ENCODE measurements at regions of chr18 and their contacts with region 1.

Region 1: DNA sequence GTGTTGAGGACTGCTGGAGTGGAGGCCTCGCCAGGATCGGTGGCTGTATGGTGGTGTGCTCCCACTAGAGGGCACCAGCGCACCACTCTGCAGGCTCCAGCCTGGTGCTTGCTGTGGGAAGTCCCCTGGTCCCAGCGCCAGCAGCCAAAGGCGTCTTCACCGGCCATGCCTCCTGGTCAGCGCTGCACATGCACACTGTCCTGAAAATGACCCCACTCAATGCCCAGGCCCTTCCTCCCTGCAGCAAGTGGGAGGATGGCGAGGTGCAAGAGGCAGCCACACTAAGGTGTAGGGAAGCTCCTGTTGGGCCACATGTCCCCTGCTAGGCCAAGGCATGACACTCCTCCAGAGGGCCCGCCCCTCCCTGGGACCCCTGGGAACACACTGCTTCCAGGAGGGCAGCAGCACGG is 136.5 kb downstream of the CTIF start:
- DNase-seq: peak; percentile 78
- ATAC-seq: peak; percentile 98
- H3K4me3 Mint-ChIP-seq: no peak overlapping the region
- H3K27ac Mint-ChIP-seq: no peak overlapping the region
- H3K4me1 Mint-ChIP-seq: peaks cover 3% of the 10 kb centered on the region
- H3K27me3 Mint-ChIP-seq: no peaks in the 10 kb centered on the region
- CTCF ChIP-seq: no peak

Region 2: GRCh38 chr18:48488388-48488850 is 186.9 kb before region 1 on chr18:
- CTCF ChIA-PET with region 1: no interaction called
- POLR2A ChIA-PET with region 1: no interaction called
- intact Hi-C with region 1: no loop called
- DNase-seq: no peak
- ATAC-seq: no peak
- H3K4me3 Mint-ChIP-seq: no peak overlapping the region
- H3K27ac Mint-ChIP-seq: no peak overlapping the region
- H3K4me1 Mint-ChIP-seq: no peaks in the 10 kb centered on the region
- H3K27me3 Mint-ChIP-seq: peaks cover 27% of the 10 kb centered on the region
- CTCF ChIP-seq: no peak

Region 3: GRCh38 chr18:48913201-48913600 is 237.8 kb after region 1 on chr18:
- CTCF ChIA-PET with region 1: no interaction called
- POLR2A ChIA-PET with region 1: no interaction called
- intact Hi-C with region 1: loop called (anchors 2 kb)
- DNase-seq: no peak
- ATAC-seq: peak; percentile 79
- H3K4me3 Mint-ChIP-seq: no peak overlapping the region
- H3K27ac Mint-ChIP-seq: no peak overlapping the region
- H3K4me1 Mint-ChIP-seq: peaks cover 10% of the 10 kb centered on the region
- H3K27me3 Mint-ChIP-seq: no peaks in the 10 kb centered on the region
- CTCF ChIP-seq: no peak

Region 4: DNA sequence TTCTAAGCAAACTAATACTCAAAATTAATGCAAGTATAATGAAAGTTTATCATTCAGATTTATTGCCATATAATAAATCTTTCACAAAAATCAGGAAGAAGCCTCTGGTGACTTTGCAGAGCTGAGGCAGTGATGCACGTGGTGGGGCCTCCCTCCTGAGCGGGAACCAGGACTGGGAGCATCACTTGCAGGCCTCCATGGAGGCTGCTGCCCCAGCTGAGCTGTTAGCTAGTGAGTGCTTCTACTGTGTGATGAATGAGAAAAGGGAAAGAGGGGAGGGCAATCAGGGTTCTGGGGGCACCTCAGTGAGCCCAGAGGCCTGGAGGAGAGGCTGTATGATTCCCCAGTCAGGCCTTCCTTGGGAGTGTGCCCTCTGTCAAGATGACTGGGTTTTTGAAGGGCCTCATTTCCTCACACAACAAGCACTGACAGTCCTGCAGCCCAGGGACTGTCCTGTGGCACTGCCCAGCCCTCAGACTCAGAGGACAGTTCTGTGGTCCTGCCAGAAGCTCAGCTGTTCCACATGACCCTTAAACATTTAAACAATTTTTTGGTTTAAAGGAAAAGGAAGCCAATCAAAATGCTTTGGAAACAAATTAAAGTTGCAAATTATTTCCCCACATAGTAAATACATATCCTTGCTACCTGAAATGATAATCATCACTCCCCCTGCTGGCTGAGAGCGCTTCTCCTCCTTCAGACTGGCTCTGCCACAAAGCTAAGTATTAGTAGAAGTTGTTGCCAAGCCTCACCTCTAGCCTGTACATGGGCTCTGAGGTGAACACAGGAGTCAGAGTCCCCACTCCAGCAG is 366.3 kb after region 1 on chr18:
- CTCF ChIA-PET with region 1: interaction called, 4 read pairs
- POLR2A ChIA-PET with region 1: no interaction called
- intact Hi-C with region 1: loop called (anchors 1 kb)
- DNase-seq: no peak
- ATAC-seq: no peak
- H3K4me3 Mint-ChIP-seq: no peak overlapping the region
- H3K27ac Mint-ChIP-seq: no peak overlapping the region
- H3K4me1 Mint-ChIP-seq: peaks cover 3% of the 10 kb centered on the region
- H3K27me3 Mint-ChIP-seq: no peaks in the 10 kb centered on the region
- CTCF ChIP-seq: no peak

Region 5: DNA sequence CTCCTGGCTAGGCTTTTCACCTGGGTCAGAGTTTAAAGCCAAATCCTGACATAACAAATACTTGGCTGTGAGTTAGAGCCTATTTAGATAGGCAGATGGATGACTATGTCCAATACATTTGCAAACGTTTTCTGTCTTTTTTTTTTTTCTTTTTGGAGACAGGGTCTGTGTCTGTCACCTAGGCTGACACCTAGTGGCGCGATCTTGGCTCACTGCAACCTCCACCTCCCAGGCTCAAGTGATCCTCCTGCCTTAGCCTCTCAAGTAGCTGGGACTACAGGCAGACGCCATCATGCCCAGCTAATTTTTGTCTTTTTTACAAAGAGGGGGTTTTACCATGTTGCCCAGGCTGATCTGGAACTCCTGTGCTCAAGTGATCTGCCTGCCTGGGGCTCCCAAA is 660.3 kb after region 1 on chr18:
- CTCF ChIA-PET with region 1: interaction called, 4 read pairs
- POLR2A ChIA-PET with region 1: no interaction called
- intact Hi-C with region 1: loop called (anchors 1 kb)
- DNase-seq: no peak
- ATAC-seq: no peak
- H3K4me3 Mint-ChIP-seq: no peak overlapping the region
- H3K27ac Mint-ChIP-seq: no peak overlapping the region
- H3K4me1 Mint-ChIP-seq: no peaks in the 10 kb centered on the region
- H3K27me3 Mint-ChIP-seq: no peaks in the 10 kb centered on the region
- CTCF ChIP-seq: no peak

Region 6: DNA sequence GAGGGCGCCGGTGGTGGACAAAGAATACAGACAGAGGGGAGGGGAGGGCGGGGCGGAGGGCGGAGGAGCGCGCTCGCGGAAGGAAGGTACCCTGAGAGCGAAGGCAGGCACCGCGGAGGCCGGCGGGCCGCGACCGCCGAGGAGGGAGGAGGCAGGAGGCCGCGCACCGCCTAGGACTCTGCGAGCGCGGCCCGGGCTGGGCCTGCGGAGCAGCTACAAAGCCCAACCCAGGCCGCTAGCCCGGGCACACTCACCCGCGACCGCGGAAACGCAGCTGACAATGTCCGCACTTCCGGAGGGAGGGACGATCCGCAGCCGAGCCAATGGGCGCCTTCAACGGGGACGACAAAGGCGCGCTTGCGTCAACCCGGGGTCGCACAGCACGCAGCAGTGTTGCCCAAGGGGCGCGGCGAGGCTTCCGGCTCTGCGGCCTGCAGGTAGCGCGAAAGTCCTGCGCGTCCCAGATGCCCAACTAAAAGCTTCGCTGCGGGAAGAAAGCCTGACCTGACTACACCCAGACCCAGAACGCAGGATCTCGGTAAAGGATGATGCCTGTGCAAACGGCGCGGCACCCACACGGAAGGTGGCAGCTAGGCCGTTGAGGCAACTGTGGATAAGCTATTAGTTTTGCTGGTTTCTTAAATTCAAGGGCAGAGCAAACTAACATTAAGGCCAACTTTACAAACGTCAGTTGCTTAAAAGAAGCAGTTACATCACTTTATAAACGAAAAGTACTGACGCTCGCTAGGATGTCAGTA is 811.8 kb after region 1 on chr18 and contains the start of gene C18orf32:
- CTCF ChIA-PET with region 1: no interaction called
- POLR2A ChIA-PET with region 1: no interaction called
- intact Hi-C with region 1: loop called (anchors 2 kb)
- DNase-seq: peak; percentile 94
- ATAC-seq: peak; percentile 92
- H3K4me3 Mint-ChIP-seq: peak within 1 kb of the TSS; percentile 94
- H3K27ac Mint-ChIP-seq: peak within 1 kb of the TSS; percentile 98
- H3K4me1 Mint-ChIP-seq: peaks cover 68% of the 10 kb centered on the region
- H3K27me3 Mint-ChIP-seq: no peaks in the 10 kb centered on the region
- CTCF ChIP-seq: no peak
- total RNA-seq, gene C18orf32: 31.6 and 32.9 TPM in 2 replicates

Region 7: DNA sequence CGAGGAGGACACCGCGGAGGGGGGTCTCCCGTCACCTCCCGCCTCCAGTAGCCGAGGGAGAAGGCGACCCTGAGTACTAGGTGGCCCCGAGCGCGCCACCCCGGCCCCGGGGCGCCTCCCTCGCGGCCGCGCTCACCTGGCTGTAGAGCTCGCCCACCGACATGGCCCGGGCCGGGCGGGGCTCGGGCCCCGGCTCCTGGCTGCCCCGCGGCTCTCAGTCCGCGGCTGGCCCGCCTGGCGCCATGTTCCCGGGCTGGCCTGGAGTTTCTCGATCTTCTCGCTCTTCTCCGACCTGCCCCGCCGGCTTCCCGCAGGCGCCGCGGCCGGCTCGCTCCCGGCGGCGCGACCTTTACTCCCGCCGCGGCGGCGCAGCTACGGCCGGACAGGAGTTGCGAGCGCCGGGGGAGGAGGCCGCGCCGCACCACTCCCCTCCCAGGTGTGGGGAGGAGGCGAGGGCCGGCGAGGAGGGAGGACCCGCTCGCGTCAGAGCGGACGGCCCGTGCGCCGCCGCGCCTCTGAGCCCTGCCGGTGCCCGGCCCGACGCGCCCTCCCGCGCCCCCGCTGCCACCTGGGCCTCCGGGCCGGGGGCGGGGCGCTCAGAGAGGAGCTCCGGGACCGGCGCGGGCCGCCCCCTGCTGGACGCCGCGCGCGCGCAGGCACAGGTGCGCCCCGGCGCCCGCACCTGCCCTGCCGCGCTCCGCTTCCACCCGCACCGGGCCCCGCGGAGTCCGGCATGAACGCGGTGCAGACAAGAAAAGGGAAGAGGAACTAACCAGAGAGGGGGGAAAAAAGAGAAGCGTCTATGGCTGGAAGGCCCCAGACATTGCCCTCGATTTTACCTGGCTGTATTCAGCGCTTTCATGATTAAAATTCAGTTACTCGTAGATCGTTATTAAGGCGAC is 1519.5 kb after region 1 on chr18 and contains the start of gene MYO5B:
- CTCF ChIA-PET with region 1: interaction called, 3 read pairs
- POLR2A ChIA-PET with region 1: no interaction called
- intact Hi-C with region 1: loop called (anchors 10 kb)
- DNase-seq: peak; percentile 57
- ATAC-seq: peak; percentile 87
- H3K4me3 Mint-ChIP-seq: peak within 1 kb of the TSS; percentile 33
- H3K27ac Mint-ChIP-seq: no peak within 1 kb of the TSS
- H3K4me1 Mint-ChIP-seq: peaks cover 12% of the 10 kb centered on the region
- H3K27me3 Mint-ChIP-seq: peaks cover 53% of the 10 kb centered on the region
- CTCF ChIP-seq: no peak
- total RNA-seq, gene MYO5B: 0.49 and 0.51 TPM in 2 replicates

Region 8: GRCh38 chr18:50429207-50429948 is 1754.0 kb after region 1 on chr18:
- CTCF ChIA-PET with region 1: no interaction called
- POLR2A ChIA-PET with region 1: no interaction called
- intact Hi-C with region 1: loop called (anchors 5 kb)
- DNase-seq: no peak
- ATAC-seq: no peak
- H3K4me3 Mint-ChIP-seq: no peak overlapping the region
- H3K27ac Mint-ChIP-seq: no peak overlapping the region
- H3K4me1 Mint-ChIP-seq: no peaks in the 10 kb centered on the region
- H3K27me3 Mint-ChIP-seq: peaks cover 5% of the 10 kb centered on the region
- CTCF ChIP-seq: no peak

Measured in activated B cell treated with CpG ODN at 0.5 μM for 24 hours (primary cell).